Activated naive CD8-positive, alpha-beta T cell treated with anti-CD3 and anti-CD28 coated beads, Interleukin-2, amount 10 ng/mL, durations not matched to agents 7 days and 5 days (primary cell): ENCODE measurements at regions of chr14 and their contacts with region 1.

Region 1: GRCh38 chr14:23379366-23380196 is 2.7 kb downstream of the CMTM5 start:
- DNase-seq: peak; percentile 74
- ATAC-seq: peak; percentile 81
- H3K4me3 Mint-ChIP-seq: no peak overlapping the region
- H3K27ac Mint-ChIP-seq: no peak overlapping the region
- H3K4me1 Mint-ChIP-seq: peaks cover 9% of the 10 kb centered on the region
- H3K27me3 Mint-ChIP-seq: peaks cover 9% of the 10 kb centered on the region

Region 2: DNA sequence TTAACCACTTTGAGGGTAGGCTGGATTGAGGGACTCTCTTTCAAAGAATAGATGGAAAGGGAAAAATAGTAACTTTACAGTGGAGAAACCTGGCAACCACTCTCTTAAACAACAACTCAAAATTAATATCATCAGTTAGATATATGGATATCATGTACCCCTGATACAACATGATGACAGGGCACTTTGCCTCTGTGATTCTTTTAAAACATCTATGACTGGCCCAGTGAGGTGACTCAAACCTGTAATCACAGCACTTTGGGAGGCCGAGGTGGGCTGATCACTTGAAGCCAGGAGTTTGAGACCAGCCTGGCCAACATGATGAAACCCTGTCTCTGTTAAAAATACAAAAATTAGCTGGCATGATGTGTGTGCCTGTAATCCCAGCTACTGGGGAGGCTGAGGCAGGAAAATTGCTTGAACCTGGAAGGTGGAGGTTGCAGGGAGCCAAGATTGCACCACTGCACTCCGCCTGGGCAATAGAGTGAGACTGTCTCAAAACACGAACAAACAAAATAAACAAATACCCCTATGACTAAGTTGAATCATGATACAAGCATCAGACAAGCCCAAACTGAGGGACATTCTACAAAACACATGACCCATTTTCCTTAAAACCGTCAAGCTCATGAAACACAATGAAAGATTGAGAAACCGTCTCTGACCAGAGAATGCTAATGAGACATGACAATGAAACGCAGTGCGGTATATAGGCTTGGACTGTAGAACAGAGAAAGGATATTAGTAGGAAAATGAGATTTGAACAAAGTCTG is 169.7 kb before region 1 on chr14:
- POLR2A ChIA-PET with region 1: no interaction called
- DNase-seq: no peak
- ATAC-seq: no peak
- H3K4me3 Mint-ChIP-seq: no peak overlapping the region
- H3K27ac Mint-ChIP-seq: no peak overlapping the region
- H3K4me1 Mint-ChIP-seq: peaks cover 1% of the 10 kb centered on the region
- H3K27me3 Mint-ChIP-seq: peaks cover 15% of the 10 kb centered on the region

Region 3: DNA sequence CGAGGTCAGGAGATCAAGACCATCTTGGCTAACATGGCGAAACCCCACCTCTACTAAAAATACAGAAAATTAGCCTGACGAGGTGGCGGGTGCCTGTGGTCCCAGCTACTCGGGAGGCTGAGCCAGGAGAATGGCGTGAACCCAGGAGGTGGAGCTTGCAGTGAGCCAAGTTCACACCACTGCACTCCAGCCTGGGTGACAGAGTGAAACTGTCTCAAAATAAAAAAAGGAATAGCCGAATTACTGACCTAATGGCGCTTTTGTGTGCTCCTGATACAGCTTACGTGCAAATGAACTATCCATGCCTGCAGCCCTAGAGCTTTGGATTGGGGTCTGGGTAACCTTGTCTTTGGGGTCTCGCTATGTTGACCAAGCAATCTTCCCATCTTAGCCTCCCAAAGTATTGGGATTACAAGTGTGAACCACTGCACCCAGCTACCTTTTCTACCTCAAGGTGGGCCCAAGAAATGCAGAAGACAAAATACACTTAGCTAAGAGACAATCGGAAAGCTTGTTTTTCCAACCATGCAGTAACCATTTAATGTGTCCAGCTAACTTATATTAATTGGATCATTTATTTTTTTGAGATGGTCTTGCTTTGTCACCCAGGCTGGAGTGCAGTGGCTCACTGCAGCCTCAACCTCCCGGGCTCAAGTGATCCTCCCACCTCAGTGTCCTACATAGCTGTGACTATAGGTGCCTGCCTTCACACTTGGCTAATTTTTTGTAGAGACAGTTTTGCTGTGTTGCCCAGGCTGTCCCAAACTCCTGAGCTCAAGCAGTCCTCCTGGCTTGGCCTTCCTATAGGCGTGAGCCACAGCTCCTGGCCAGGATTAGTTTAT is 52.9 kb before region 1 on chr14:
- POLR2A ChIA-PET with region 1: interaction called, 11 read pairs
- DNase-seq: no peak
- ATAC-seq: no peak
- H3K4me3 Mint-ChIP-seq: no peak overlapping the region
- H3K27ac Mint-ChIP-seq: no peak overlapping the region
- H3K4me1 Mint-ChIP-seq: peaks cover 16% of the 10 kb centered on the region
- H3K27me3 Mint-ChIP-seq: no peaks in the 10 kb centered on the region